Panc1 (cell line): ENCODE measurements at regions of chr10 and their contacts with region 1.

Region 1: GRCh38 chr10:27360581-27361172 is 120.1 kb upstream of the ACBD5 start:
- DNase-seq: peak; percentile 53
- ATAC-seq: peak; percentile 91
- H3K4me3 ChIP-seq: no peak overlapping the region
- H3K27ac ChIP-seq: no peak overlapping the region
- H3K4me1 ChIP-seq: no peaks in the 10 kb centered on the region
- H3K27me3 ChIP-seq: no peaks in the 10 kb centered on the region
- CTCF ChIP-seq: peak; percentile 89

Region 2: GRCh38 chr10:27223964-27224363 is 136.7 kb before region 1 on chr10:
- CTCF ChIA-PET with region 1: interaction called, 7 read pairs
- POLR2A ChIA-PET with region 1: no interaction called
- in situ Hi-C with region 1: no loop called
- intact Hi-C with region 1: loop called (anchors 5 kb)
- DNase-seq: no peak
- ATAC-seq: peak; percentile 74; the same call in 1 of the 2 replicates
- H3K4me3 ChIP-seq: no peak overlapping the region
- H3K27ac ChIP-seq: no peak overlapping the region
- H3K4me1 ChIP-seq: no peaks in the 10 kb centered on the region
- H3K27me3 ChIP-seq: no peaks in the 10 kb centered on the region
- CTCF ChIP-seq: peak; percentile 82